ENCODE measurements at regions of chr1 and their contacts with region 1.

Region 1: DNA sequence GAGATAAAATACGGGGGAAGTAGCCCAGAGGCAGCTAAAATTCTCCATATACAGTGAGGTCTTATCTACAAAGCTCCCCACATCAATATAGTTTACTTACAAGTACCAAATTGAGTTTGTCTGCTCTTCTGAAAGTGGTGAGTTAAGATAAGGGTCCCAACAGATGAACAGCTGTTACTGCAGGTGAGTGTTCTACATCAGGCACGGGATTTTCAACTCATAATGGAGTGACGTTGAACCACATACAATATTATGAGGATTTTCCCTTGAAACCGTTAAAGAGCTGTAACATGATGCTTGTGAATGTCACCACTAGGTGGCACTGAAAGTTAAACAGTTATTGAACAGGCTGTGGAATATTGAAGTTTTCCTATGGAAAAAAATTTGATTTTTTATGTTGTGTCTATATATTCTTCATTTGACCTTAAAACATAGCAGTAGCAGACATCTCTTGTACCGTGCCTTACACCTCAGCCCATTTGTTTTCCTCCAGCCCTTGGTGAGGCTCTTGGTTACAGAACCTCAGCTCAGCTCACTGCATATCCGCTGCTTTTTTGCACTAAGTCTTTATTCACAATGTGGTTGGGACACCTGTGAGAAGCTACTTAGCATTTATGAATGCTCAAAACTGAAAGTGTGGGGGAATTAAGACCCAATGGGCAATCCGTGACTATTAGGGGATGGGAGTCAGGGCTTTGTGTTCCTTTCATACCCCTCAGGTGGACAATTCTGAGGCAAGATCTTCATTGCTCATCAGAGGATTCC is 23.2 kb downstream of the CD1D start:
- DNase-seq: no peak
- H3K4me3 Mint-ChIP-seq: no peak overlapping the region
- H3K27ac Mint-ChIP-seq: no peak overlapping the region
- H3K4me1 Mint-ChIP-seq: peaks cover 2% of the 10 kb centered on the region
- H3K27me3 Mint-ChIP-seq: peaks cover 19% of the 10 kb centered on the region

Region 2: GRCh38 chr1:158329733-158330132 is 125.9 kb after region 1 on chr1:
- CTCF ChIA-PET with region 1: interaction called, 26 read pairs
- DNase-seq: no peak
- H3K4me3 Mint-ChIP-seq: no peak overlapping the region
- H3K27ac Mint-ChIP-seq: no peak overlapping the region
- H3K4me1 Mint-ChIP-seq: peaks cover 12% of the 10 kb centered on the region
- H3K27me3 Mint-ChIP-seq: peaks cover 4% of the 10 kb centered on the region

Region 3: DNA sequence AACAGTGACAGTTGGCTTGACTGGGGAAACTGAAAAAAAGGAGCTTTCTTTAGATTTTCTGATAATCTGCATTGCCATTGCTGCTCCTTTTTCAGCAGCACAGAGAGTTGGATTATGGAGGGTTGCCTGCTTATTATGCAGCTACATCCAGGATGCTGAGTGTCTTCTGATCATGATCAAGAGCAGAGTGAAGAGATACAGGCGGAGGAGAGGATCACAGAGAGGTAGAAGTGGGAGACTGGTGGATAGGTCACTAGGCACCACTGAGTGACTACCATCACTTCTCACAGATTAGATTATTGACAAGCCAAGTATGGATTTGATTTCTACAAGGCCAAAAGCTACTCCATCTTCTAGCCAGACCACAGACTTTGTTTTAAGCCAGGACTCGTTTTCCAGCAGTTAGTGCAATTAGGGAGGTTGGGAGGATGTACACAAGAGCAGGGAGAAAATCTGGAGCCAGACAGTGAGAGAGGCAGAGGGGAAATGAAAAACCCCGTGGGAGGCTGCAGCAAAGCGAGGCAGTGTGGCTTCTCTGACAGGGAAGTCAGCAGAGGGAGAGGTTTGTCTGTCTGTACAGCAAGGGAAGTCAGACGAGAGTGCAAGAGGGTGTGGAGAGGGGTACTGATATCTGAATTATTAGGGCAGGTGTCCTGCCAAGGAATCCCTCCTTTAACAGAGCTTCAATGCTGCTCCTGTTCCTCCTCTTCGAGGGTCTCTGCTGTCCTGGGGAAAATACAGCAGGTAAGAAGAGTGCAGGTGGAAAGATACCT is 149.6 kb after region 1 on chr1 and contains the start of gene CD1E:
- CTCF ChIA-PET with region 1: no interaction called
- DNase-seq: no peak
- H3K4me3 Mint-ChIP-seq: no peak within 1 kb of the TSS
- H3K27ac Mint-ChIP-seq: no peak within 1 kb of the TSS
- H3K4me1 Mint-ChIP-seq: no peaks in the 10 kb centered on the region
- H3K27me3 Mint-ChIP-seq: peaks cover 17% of the 10 kb centered on the region

Region 4: DNA sequence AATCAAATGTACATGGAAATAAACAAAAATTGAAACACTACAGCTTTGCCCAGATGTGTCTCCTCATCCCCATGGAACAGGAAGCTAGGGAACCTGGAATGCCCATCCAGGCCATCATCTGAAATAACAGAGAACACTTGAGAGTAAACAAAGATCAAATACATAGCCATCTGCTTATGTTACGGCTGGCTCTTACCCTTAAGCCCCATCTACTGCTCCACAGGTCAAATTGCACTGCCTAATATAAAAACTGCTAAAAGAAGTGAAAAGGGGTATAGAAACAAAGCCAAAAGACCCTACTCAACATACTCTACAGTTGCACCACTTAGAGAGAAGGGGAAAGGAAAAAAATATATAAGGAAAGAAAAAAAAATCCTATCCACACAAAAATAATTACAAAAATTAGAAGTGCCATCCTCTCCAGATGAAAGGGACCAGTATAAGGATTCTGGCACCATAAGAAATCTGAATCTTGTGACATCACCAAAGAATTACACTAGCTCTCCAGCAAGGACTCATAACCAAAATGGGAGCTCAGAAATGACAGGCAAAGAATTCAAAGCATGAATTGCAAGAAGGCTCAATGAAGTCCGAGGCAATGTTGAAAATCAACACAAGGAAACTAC is 323.4 kb after region 1 on chr1:
- CTCF ChIA-PET with region 1: interaction called, 10 read pairs
- DNase-seq: no peak
- H3K4me3 Mint-ChIP-seq: no peak overlapping the region
- H3K27ac Mint-ChIP-seq: no peak overlapping the region
- H3K4me1 Mint-ChIP-seq: no peaks in the 10 kb centered on the region
- H3K27me3 Mint-ChIP-seq: peaks cover 12% of the 10 kb centered on the region

Region 5: GRCh38 chr1:158998781-158999161 is 794.9 kb after region 1 on chr1:
- CTCF ChIA-PET with region 1: interaction called, 13 read pairs
- DNase-seq: peak; percentile 53
- H3K4me3 Mint-ChIP-seq: no peak overlapping the region
- H3K27ac Mint-ChIP-seq: no peak overlapping the region
- H3K4me1 Mint-ChIP-seq: peaks cover 37% of the 10 kb centered on the region
- H3K27me3 Mint-ChIP-seq: no peaks in the 10 kb centered on the region

Measured in activated naive CD4-positive, alpha-beta T cell treated with anti-CD3 and anti-CD28 coated beads, Interleukin-2, amount 10 ng/mL, durations not matched to agents 7 days and 5 days (primary cell).